ENCODE measurements at regions of chr2 and their contacts with region 1.

Region 1: DNA sequence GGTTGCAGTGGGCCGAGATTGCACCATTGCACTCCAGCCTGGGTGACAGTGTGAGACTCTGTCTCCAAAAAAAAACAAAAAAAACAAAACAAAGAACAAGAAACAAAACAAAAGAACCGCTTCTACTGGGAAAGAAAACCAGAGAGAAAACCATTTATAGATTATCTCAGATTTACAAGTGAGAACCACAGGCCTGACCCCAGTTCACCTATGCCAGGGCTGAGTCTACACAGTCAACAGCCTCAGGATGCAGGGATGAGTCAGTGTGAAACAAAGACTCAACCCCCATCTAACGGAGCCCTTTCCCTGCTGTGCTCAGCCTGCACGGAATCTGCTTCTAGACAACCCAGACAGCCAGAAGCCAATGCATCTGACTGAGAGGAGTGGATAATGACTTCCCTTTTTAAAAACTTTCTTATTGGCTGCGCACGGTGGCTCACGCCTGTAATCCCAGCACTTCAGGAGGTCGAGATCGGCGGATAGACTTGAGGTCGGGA is 25.5 kb upstream of the YWHAQ start:
- DNase-seq: peak; percentile 90
- H3K4me3 Mint-ChIP-seq: peak overlapping the region; percentile 40
- H3K27ac Mint-ChIP-seq: peak overlapping the region; percentile 94
- H3K4me1 Mint-ChIP-seq: peaks cover 43% of the 10 kb centered on the region
- H3K27me3 Mint-ChIP-seq: peaks cover 9% of the 10 kb centered on the region

Region 2: GRCh38 chr2:9493478-9493877 is 162.8 kb before region 1 on chr2:
- CTCF ChIA-PET with region 1: no interaction called
- POLR2A ChIA-PET with region 1: interaction called, 4 read pairs
- intact Hi-C with region 1: loop called (anchors 1 kb)
- DNase-seq: no peak
- H3K4me3 Mint-ChIP-seq: no peak overlapping the region
- H3K27ac Mint-ChIP-seq: peak overlapping the region; percentile 80
- H3K4me1 Mint-ChIP-seq: peaks cover 52% of the 10 kb centered on the region
- H3K27me3 Mint-ChIP-seq: no peaks in the 10 kb centered on the region

Region 3: GRCh38 chr2:9601397-9601796 is 54.9 kb before region 1 on chr2:
- CTCF ChIA-PET with region 1: no interaction called
- POLR2A ChIA-PET with region 1: no interaction called
- intact Hi-C with region 1: no loop called
- DNase-seq: no peak
- H3K4me3 Mint-ChIP-seq: no peak overlapping the region
- H3K27ac Mint-ChIP-seq: no peak overlapping the region
- H3K4me1 Mint-ChIP-seq: peaks cover 62% of the 10 kb centered on the region
- H3K27me3 Mint-ChIP-seq: no peaks in the 10 kb centered on the region

Region 4: DNA sequence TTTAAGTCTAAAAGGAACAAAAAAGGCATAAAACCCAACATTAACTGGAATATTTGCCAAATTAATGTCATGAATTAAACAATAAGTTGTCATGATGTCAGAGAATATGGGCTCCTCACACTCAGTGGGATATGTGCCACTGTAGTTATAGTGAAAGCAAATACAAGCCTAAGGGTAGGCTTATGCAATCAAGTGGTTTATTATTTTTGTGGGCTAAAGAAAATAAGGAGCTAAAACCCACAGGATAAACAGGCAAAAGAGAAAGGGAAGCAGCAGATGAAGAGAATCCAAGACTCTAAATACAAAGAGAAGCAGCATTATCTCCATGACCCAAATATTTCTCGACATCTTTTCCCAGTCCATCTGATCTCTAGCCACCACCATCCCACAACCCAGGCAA is 43.0 kb before region 1 on chr2:
- CTCF ChIA-PET with region 1: interaction called, 3 read pairs
- POLR2A ChIA-PET with region 1: interaction called, 6 read pairs
- intact Hi-C with region 1: loop called (anchors 1 kb)
- DNase-seq: no peak
- H3K4me3 Mint-ChIP-seq: no peak overlapping the region
- H3K27ac Mint-ChIP-seq: no peak overlapping the region
- H3K4me1 Mint-ChIP-seq: peaks cover 90% of the 10 kb centered on the region
- H3K27me3 Mint-ChIP-seq: no peaks in the 10 kb centered on the region

Region 5: DNA sequence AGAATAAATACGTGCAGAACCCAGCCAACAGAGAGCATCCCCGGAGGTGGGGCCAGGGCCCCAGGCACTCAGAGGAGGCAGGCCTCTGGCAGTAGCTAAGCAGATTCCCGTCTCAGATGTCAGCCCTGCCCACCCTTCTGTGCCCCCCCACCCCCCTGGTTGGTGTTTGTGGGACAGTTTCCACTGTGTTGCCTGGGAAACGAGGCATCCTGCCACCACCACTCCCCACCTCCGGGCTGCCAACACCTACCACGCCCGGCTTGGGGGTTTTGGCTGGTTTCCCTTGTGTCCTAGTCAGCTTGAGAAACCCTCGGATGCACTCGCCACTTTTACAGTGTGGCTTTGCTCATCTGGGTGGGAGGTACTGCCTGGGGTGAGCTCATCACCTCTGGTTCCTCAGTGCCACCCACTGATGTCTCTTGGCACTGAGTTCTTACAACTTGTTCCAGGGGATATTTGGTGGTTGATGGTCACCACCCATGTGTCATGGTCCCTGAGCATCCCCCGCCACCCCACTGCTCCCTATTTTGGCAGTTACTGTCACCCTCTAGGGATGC is 46.8 kb after region 1 on chr2:
- CTCF ChIA-PET with region 1: interaction called, 12 read pairs
- POLR2A ChIA-PET with region 1: interaction called, 17 read pairs
- intact Hi-C with region 1: loop called (anchors 1 kb)
- DNase-seq: peak; percentile 95
- H3K4me3 Mint-ChIP-seq: no peak overlapping the region
- H3K27ac Mint-ChIP-seq: peak overlapping the region; percentile 75
- H3K4me1 Mint-ChIP-seq: peaks cover 54% of the 10 kb centered on the region
- H3K27me3 Mint-ChIP-seq: peaks cover 3% of the 10 kb centered on the region

Region 6: DNA sequence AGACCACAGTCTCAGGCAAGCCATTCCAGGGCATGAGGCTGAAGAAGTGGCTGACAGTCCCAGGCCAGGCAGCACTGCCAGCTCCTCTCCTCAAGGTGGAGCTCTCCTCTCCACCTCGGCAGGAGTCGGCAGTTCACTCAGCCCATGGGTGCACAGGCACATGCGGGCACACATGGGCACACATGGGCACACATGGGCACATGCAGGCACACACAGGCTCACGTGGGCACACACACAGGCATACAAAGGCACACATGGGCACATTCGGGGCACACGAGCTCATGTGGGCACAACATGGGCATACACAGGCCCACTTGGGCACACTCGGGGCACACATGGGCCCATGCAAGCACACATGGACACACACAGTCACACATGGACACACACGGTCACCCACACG is 121.7 kb after region 1 on chr2:
- CTCF ChIA-PET with region 1: no interaction called
- POLR2A ChIA-PET with region 1: interaction called, 4 read pairs
- intact Hi-C with region 1: loop called (anchors 1 kb)
- DNase-seq: peak; percentile 55
- H3K4me3 Mint-ChIP-seq: no peak overlapping the region
- H3K27ac Mint-ChIP-seq: peak overlapping the region; percentile 38
- H3K4me1 Mint-ChIP-seq: peaks cover 47% of the 10 kb centered on the region
- H3K27me3 Mint-ChIP-seq: no peaks in the 10 kb centered on the region